ENCODE measurements at regions of chr22 and their contacts with region 1.

Region 1: GRCh38 chr22:32474635-32475467 is at the start of gene FBXO7:
- DNase-seq: peak; percentile 84
- ATAC-seq: peak; percentile 87
- H3K4me3 ChIP-seq: peak within 1 kb of the TSS; percentile 94 to 98 (median 96)
- H3K27ac ChIP-seq: peak within 1 kb of the TSS; percentile 97
- H3K4me1 ChIP-seq: peaks cover 33% of the 10 kb centered on the region
- H3K27me3 ChIP-seq: peaks cover 0 to 7% of the 10 kb centered on the region in 2 experiments; a peak in 1 of 5 replicates
- CTCF ChIP-seq: peak; percentile 74
- EP300 ChIP-seq: peak in 1 of 2 experiments; percentile 18; a peak in 1 of 4 replicates
- POLR2A ChIP-seq: peak; percentile 64 to 78
- RAD21 ChIP-seq: peak; percentile 72
- total RNA-seq, gene FBXO7: 105 and 118 TPM in 2 replicates

Region 2: DNA sequence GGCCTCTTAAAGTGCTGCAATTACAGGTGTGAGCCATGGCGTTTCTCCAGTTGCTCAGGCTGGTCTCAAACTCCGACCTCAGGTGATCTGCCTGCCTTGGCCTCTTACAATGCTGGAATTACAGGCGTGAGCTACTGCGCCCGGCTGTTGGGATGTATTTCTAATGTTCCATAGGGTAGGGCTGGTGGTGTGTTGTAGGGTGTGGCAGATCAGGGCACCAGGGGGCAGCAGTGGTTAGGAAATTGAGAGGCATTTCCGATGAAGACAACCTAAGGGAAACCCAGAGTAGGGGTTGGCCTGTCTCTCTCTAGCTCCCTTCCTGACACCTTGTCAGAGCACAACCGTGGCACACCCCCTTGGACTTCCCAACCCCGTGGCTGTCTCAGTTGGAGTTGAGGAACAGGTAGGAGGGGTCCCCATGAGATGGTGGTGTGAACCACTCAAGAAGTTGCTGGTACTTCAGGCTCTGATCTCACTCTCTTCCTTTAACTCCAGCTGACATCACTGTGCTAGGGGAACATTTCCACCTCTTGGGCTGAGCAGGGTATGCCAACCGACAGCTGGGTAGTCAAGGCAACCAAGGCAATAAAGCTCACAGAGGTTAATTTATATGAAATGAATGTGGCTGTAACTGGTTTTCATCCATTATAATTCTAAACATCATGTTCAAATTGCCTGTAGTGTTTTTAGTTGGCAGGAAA is 497.6 kb before region 1 on chr22:
- CTCF ChIA-PET with region 1: interaction called, 6 read pairs
- POLR2A ChIA-PET with region 1: no interaction called
- in situ Hi-C with region 1: no loop called
- intact Hi-C with region 1: loop called (anchors 5 kb)
- DNase-seq: peak; percentile 62
- ATAC-seq: peak; percentile 92
- H3K4me3 ChIP-seq: no peak overlapping the region
- H3K27ac ChIP-seq: no peak overlapping the region
- H3K4me1 ChIP-seq: peaks cover 4% of the 10 kb centered on the region
- H3K27me3 ChIP-seq: peaks cover 0 to 7% of the 10 kb centered on the region in 2 experiments; a peak in 2 of 5 replicates
- CTCF ChIP-seq: peak; percentile 93
- EP300 ChIP-seq: no peak
- POLR2A ChIP-seq: no peak
- RAD21 ChIP-seq: peak; percentile 73

Region 3: GRCh38 chr22:32378707-32379272 is 96.1 kb before region 1 on chr22:
- CTCF ChIA-PET with region 1: interaction called, 14 read pairs
- POLR2A ChIA-PET with region 1: no interaction called
- in situ Hi-C with region 1: no loop called
- intact Hi-C with region 1: no loop called
- DNase-seq: peak; percentile 51
- ATAC-seq: peak; percentile 94
- H3K4me3 ChIP-seq: no peak overlapping the region
- H3K27ac ChIP-seq: no peak overlapping the region
- H3K4me1 ChIP-seq: no peaks in the 10 kb centered on the region
- H3K27me3 ChIP-seq: no peaks in the 10 kb centered on the region; a peak in 1 of 5 replicates
- CTCF ChIP-seq: peak; percentile 85
- EP300 ChIP-seq: no peak
- POLR2A ChIP-seq: no peak
- RAD21 ChIP-seq: peak; percentile 78

Region 4: GRCh38 chr22:32411829-32412592 is 62.8 kb before region 1 on chr22 and contains the start of gene RTCB:
- CTCF ChIA-PET with region 1: interaction called, 10 read pairs
- POLR2A ChIA-PET with region 1: interaction called, 10 read pairs
- in situ Hi-C with region 1: loop called (anchors 5 kb)
- intact Hi-C with region 1: loop called (anchors 1 kb)
- DNase-seq: peak; percentile 83
- ATAC-seq: peak; percentile 88
- H3K4me3 ChIP-seq: peak within 1 kb of the TSS; percentile 85 to 94 (median 88)
- H3K27ac ChIP-seq: peak within 1 kb of the TSS; percentile 83
- H3K4me1 ChIP-seq: peaks cover 38% of the 10 kb centered on the region
- H3K27me3 ChIP-seq: peaks cover 2 to 8% of the 10 kb centered on the region in 2 experiments; a peak in 2 of 5 replicates
- CTCF ChIP-seq: 0 out of 2 replicates have a peak, but pooled peaks have one; percentile 26
- EP300 ChIP-seq: no peak
- POLR2A ChIP-seq: peak; percentile 67 to 87
- RAD21 ChIP-seq: no peak
- total RNA-seq, gene RTCB: 167 and 227 TPM in 2 replicates

Region 5: GRCh38 chr22:32545801-32546200 is 71.0 kb after region 1 on chr22:
- CTCF ChIA-PET with region 1: no interaction called
- POLR2A ChIA-PET with region 1: no interaction called
- in situ Hi-C with region 1: no loop called
- intact Hi-C with region 1: no loop called
- DNase-seq: peak; percentile 69
- ATAC-seq: peak; percentile 62
- H3K4me3 ChIP-seq: no peak overlapping the region
- H3K27ac ChIP-seq: no peak overlapping the region
- H3K4me1 ChIP-seq: peaks cover 18% of the 10 kb centered on the region
- H3K27me3 ChIP-seq: no peaks in the 10 kb centered on the region
- CTCF ChIP-seq: no peak
- EP300 ChIP-seq: 0 out of 4 replicates have a peak, but pooled peaks have one; percentile 19 to 21
- POLR2A ChIP-seq: no peak
- RAD21 ChIP-seq: no peak